Natural killer cell (primary cell): ENCODE measurements at regions of chr16 and their contacts with region 1.

Region 1: GRCh38 chr16:53282975-53283946 is 151.0 kb upstream of the RBL2 start:
- DNase-seq: peak in 1 of 2 donors; percentile 53
- ATAC-seq: no peak
- H3K4me3 ChIP-seq: no peak overlapping the region
- H3K4me3 Mint-ChIP-seq: no peak overlapping the region
- H3K27ac ChIP-seq: no peak overlapping the region
- H3K27ac Mint-ChIP-seq: no peak overlapping the region
- H3K4me1 ChIP-seq: no peaks in the 10 kb centered on the region
- H3K4me1 Mint-ChIP-seq: no peaks in the 10 kb centered on the region
- H3K27me3 ChIP-seq: no peaks in the 10 kb centered on the region
- H3K27me3 Mint-ChIP-seq: no peaks in the 10 kb centered on the region
- CTCF ChIP-seq: peak; percentile 18

Region 2: DNA sequence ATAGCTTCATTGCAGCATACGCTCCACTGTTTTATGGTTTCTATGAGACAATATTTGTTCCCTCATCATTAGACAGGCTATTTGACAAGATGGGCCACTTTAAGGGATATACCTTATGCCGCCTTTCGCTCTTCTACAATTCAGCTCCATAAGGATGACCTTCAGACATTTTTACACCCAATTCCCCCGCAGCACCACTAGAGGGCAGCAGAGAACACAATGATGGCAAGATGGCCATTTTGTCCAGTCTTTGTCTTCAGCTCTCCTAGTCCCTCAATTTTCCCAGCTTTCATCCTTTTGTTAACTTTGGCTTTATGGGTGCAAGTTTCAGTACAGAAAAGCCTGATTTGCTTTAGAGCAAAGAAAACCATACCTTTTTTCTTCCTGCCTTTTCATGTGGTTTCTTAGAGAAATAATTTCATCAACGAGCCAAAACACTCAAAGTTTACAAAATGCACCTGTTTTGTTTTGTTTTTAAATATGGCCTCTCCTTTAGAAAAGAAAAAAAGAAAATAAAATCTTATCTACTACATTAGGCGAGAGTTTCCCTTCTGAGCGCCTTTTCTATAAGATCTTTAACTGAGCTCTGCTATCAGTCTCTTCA is 1091.6 kb before region 1 on chr16:
- intact Hi-C with region 1: loop called (anchors 10 kb)
- DNase-seq: peak in 1 of 2 donors; percentile 70
- ATAC-seq: peak in 2 of 3 donors; percentile 52 to 56
- H3K4me3 ChIP-seq: no peak overlapping the region
- H3K4me3 Mint-ChIP-seq: no peak overlapping the region
- H3K27ac ChIP-seq: no peak overlapping the region
- H3K27ac Mint-ChIP-seq: no peak overlapping the region
- H3K4me1 ChIP-seq: no peaks in the 10 kb centered on the region
- H3K4me1 Mint-ChIP-seq: no peaks in the 10 kb centered on the region
- H3K27me3 ChIP-seq: no peaks in the 10 kb centered on the region
- H3K27me3 Mint-ChIP-seq: no peaks in the 10 kb centered on the region
- CTCF ChIP-seq: peak; percentile 74